ENCODE measurements at regions of chr13 and their contacts with region 1.

Region 1: DNA sequence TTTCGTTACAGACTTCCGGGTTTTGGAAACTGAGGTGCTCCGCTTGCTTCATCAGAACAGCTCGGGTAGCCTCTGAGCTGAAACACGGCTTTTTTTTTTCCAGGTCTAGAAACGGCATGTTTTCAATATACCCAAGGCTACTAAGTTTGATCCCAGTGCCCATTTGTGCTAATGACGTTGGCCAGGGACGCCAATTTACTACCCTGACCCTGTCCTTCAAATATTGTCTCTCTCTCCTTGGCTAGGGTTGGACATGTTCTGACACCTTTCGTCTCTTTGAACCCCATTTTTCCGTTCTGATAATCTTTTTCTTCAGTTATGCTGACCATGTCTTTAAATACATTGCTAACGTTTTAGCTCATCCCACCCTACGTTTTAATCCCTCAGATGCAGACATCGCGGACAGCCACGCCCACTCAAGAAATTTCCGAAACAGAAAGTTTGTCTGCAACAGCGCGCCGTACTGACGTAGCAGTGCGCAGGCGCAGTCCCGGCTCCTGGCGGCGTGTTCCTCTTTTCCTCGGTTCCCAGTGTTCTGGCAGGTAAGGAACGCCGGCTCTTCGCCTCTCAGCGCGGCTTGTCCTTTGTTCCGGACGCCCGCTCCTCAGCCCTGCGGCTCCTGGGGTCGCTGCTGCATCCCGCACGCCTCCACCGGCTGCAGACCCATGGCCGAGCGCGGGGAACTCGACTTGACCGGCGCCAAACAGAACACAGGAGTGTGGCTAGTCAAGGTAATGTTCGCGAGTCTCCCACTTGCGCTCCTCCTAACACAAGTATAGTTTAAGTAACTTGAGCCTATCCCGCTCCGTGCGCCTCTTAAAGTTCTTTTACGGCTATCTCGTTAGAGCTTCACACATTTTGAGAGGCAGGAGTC is at the start of gene GTF2F2:
- DNase-seq: peak; percentile 81 to 89 (median 86)
- ATAC-seq: peak; percentile 80
- H3K4me3 ChIP-seq: peak within 1 kb of the TSS; percentile 80
- H3K4me3 Mint-ChIP-seq: no peak within 1 kb of the TSS
- H3K27ac ChIP-seq: peak within 1 kb of the TSS; percentile 91
- H3K27ac Mint-ChIP-seq: no peak within 1 kb of the TSS
- H3K4me1 ChIP-seq: peaks cover 16 to 21% of the 10 kb centered on the region in 2 donors
- H3K4me1 Mint-ChIP-seq: peaks cover 6 to 17% (median 13%) of the 10 kb centered on the region in 7 donors
- H3K27me3 ChIP-seq: no peaks in the 10 kb centered on the region
- H3K27me3 Mint-ChIP-seq: no peaks in the 10 kb centered on the region
- total RNA-seq, gene GTF2F2: 13.7 to 20.4 (median 15.2) TPM

Region 2: DNA sequence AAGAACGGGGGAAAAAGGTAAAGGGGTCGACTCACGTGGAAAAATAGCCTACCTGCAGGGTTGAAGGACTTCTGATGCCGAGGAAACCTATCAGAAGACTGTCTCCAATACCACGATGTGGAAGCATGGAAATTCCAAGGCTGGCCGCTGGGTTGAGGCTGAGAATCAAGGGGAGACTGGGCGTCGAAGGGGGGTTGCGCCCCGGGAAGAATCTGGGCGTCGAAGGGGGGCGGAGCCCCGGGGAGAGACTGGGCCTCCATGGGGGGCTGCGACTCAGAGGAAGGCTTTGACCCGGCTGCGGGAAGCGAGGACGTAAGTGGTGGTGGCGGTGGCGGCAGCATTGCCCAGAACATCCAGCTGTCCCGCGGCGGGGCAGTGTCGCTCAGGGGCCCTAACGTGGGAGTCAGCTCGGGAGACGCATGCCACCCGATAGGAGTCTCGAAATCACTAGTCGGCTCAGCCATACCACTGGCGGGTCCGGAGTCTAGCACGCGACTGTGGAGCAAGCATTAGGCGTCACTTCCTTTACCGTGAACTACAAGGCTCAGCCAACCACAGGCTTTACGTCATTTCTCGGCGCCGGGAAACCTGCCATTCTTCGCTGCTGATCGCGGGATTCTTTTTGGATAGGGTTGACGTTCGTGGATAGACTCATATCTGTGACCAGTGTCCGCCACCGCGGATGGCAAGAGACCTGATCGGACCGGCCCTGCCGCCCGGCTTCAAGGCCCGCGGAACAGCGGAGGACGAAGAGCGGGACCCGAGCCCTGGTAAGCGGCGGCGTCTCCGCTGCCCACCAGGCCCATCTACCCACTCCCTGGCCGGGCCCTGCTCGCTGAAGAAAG is 131.0 kb before region 1 on chr13 and contains the starts of genes GPALPP1 and NUFIP1:
- CTCF ChIA-PET with region 1: no interaction called
- POLR2A ChIA-PET with region 1: no interaction called
- intact Hi-C with region 1: loop called (anchors 1 kb)
- DNase-seq: peak; percentile 79 to 94 (median 90)
- ATAC-seq: peak; percentile 98
- H3K4me3 ChIP-seq: peak within 1 kb of the TSS; percentile 94
- H3K4me3 Mint-ChIP-seq: peak within 1 kb of the TSS; percentile 96 to 100 (median 98)
- H3K27ac ChIP-seq: peak within 1 kb of the TSS; percentile 95
- H3K27ac Mint-ChIP-seq: peak within 1 kb of the TSS; percentile 91 to 99 (median 98)
- H3K4me1 ChIP-seq: peaks cover 18 to 27% of the 10 kb centered on the region in 2 donors
- H3K4me1 Mint-ChIP-seq: peaks cover 42 to 81% (median 68%) of the 10 kb centered on the region in 7 donors
- H3K27me3 ChIP-seq: no peaks in the 10 kb centered on the region
- H3K27me3 Mint-ChIP-seq: no peaks in the 10 kb centered on the region
- total RNA-seq, gene GPALPP1: 29.7 to 43.1 (median 33.0) TPM
- total RNA-seq, gene NUFIP1: 3.7 to 6.6 (median 5.4) TPM

Region 3: GRCh38 chr13:45297456-45298205 is 177.4 kb after region 1 on chr13:
- CTCF ChIA-PET with region 1: no interaction called
- POLR2A ChIA-PET with region 1: no interaction called
- intact Hi-C with region 1: loop called in 1 of 2 experiments (anchors 10 kb)
- DNase-seq: peak in 6 of 9 donors; percentile 5 to 55 (median 39)
- ATAC-seq: peak; percentile 69
- H3K4me3 ChIP-seq: no peak overlapping the region
- H3K4me3 Mint-ChIP-seq: peak overlapping the region; percentile 2 to 56 (median 30)
- H3K27ac ChIP-seq: peak overlapping the region; percentile 8
- H3K27ac Mint-ChIP-seq: peak overlapping the region; percentile 69 to 93 (median 83)
- H3K4me1 ChIP-seq: peaks cover 21 to 30% of the 10 kb centered on the region in 2 donors
- H3K4me1 Mint-ChIP-seq: peaks cover 30 to 54% (median 39%) of the 10 kb centered on the region in 7 donors
- H3K27me3 ChIP-seq: no peaks in the 10 kb centered on the region
- H3K27me3 Mint-ChIP-seq: peaks cover 0 to 1% (median 0%) of the 10 kb centered on the region in 5 donors

Measured in naive thymus-derived CD4-positive, alpha-beta T cell (primary cell).